Activated CD4-positive, alpha-beta T cell treated with anti-CD3 and anti-CD28 coated beads for 36 hours (primary cell): ENCODE measurements at regions of chr14 and their contacts with region 1.

Region 1: DNA sequence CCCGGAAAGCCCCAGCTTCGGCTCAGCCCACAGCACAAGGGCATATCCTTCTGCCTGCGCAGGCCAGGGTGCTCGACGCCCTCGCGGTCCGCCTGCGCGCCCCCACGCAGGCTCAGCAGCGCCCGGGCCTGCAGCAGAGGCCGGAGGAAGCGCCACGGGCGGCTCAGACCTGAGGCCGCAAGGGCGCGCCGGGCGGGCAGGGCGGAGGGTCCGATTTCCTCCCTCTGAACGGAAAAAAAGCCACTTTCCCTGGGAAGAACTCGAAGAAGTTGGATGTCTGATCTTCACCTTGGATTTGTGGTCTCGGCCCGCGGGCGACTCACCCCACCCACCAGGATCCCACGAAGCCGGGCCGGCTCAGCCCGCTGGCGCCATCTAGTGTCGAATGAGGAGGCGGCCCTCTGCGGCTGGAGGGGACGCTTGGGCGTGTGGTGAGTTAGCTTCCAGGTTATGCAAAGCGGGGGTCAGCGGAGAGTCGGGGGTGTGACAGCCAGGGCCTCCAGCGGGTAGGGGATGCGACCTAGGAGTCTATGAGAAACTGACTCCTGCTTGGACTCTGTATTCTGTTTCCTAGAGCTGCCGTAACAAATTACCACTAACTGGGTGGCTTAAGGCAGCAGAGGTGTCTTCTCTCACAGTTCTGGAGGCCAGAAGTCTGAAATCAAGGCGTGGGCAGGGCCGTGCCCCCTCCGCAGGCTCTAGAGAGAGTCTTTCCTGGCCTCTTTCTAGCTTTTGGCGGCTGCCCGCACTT is 40.0 kb upstream of the SRSF5 start:
- DNase-seq: peak; percentile 90
- ATAC-seq: peak; percentile 91
- H3K4me3 Mint-ChIP-seq: peak overlapping the region; percentile 61
- H3K27ac Mint-ChIP-seq: peak overlapping the region; percentile 21
- H3K4me1 Mint-ChIP-seq: peaks cover 15% of the 10 kb centered on the region
- H3K27me3 Mint-ChIP-seq: peaks cover under 1% of the 10 kb centered on the region

Region 2: GRCh38 chr14:69242311-69243224 is 484.4 kb before region 1 on chr14:
- CTCF ChIA-PET with region 1: no interaction called
- POLR2A ChIA-PET with region 1: no interaction called
- intact Hi-C with region 1: loop called in 1 of 2 experiments (anchors 10 kb)
- DNase-seq: peak; percentile 70
- ATAC-seq: peak; percentile 86
- H3K4me3 Mint-ChIP-seq: no peak overlapping the region
- H3K27ac Mint-ChIP-seq: no peak overlapping the region
- H3K4me1 Mint-ChIP-seq: no peaks in the 10 kb centered on the region
- H3K27me3 Mint-ChIP-seq: no peaks in the 10 kb centered on the region

Region 3: GRCh38 chr14:69580009-69580577 is 146.8 kb before region 1 on chr14:
- CTCF ChIA-PET with region 1: interaction called, 77 read pairs
- POLR2A ChIA-PET with region 1: no interaction called
- intact Hi-C with region 1: loop called (anchors 1 kb)
- DNase-seq: peak; percentile 54
- ATAC-seq: peak; percentile 64
- H3K4me3 Mint-ChIP-seq: no peak overlapping the region
- H3K27ac Mint-ChIP-seq: no peak overlapping the region
- H3K4me1 Mint-ChIP-seq: no peaks in the 10 kb centered on the region
- H3K27me3 Mint-ChIP-seq: peaks cover 13% of the 10 kb centered on the region

Region 4: GRCh38 chr14:69611201-69612011 is 115.5 kb before region 1 on chr14 and contains the start of gene SUSD6:
- CTCF ChIA-PET with region 1: interaction called, 5 read pairs
- POLR2A ChIA-PET with region 1: no interaction called
- intact Hi-C with region 1: loop called in 1 of 2 experiments (anchors 2 kb)
- DNase-seq: peak; percentile 95
- ATAC-seq: peak; percentile 74
- H3K4me3 Mint-ChIP-seq: peak within 1 kb of the TSS; percentile 87
- H3K27ac Mint-ChIP-seq: peak within 1 kb of the TSS; percentile 99
- H3K4me1 Mint-ChIP-seq: peaks cover 48% of the 10 kb centered on the region
- H3K27me3 Mint-ChIP-seq: no peaks in the 10 kb centered on the region
- total RNA-seq, gene SUSD6: 57.9 to 59.3 TPM

Region 5: DNA sequence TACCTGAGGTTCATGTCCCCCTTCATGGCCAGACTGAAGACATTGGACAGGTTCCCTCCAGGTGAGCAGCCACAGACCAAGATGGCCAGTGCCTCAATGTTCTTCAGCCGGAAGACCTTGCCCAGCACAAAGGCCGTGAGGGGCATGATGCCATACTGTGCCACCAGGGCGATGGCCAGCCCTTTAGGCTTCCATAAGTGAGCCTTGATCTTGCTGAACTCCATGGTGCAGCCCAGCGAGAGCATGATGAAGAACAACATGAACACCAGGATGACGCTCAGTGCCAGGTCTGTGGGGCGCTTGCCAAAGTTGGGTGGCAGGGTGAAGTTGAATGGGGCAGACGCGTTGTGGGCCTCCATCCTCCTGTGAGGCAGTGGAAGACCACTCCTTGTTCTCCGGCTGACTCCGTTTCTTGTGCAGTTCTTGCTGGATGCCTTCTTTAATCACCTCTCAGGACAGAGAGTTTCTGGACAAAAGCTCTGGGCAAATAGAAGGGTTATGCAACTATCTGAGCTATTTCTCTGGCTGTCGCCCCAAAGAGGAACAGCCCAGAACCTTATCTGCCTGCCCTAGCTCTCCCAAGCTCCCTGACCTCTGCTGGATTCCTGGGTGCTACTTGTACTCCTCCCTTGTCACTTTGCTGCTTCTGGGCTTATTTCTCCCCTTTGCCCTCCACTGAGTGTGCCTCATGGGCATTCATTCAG is 70.0 kb after region 1 on chr14 and contains the start of gene SLC10A1:
- CTCF ChIA-PET with region 1: no interaction called
- POLR2A ChIA-PET with region 1: no interaction called
- intact Hi-C with region 1: loop called in 1 of 2 experiments (anchors 5 kb)
- DNase-seq: no peak
- ATAC-seq: no peak
- H3K4me3 Mint-ChIP-seq: no peak within 1 kb of the TSS
- H3K27ac Mint-ChIP-seq: no peak within 1 kb of the TSS
- H3K4me1 Mint-ChIP-seq: no peaks in the 10 kb centered on the region
- H3K27me3 Mint-ChIP-seq: no peaks in the 10 kb centered on the region
- total RNA-seq, gene SLC10A1: not detected

Region 6: DNA sequence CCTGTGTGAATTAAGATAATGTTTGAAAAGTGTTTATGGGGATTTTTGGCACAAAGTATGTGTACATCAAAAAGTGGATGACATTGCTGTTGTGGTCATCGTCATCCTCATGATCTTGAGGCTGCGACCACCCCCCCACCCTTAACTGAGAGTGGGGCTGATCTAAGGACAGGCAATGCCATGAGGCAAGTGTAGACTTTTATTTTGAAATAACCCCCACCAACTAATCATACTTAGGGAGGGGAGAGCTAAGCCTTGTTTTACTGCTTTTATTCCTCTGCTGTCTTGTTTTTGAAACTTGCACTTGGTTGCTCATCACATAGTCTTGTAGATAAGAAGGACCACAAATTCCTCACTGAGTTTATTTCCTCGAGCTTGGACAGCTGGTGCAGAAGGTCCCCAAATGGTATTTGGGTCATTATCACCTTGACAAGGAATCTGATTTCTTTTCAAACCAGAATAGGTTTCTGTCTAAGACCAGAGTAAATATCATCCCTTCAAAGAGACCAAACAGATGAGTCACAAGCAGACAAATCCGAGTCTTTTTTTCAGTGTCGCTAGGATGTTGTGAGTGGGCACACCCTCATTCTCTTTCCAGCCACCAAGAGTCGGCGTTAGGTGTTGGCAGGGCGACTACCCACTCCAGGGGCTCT is 128.4 kb after region 1 on chr14:
- CTCF ChIA-PET with region 1: no interaction called
- POLR2A ChIA-PET with region 1: no interaction called
- intact Hi-C with region 1: no loop called
- DNase-seq: no peak
- ATAC-seq: no peak
- H3K4me3 Mint-ChIP-seq: no peak overlapping the region
- H3K27ac Mint-ChIP-seq: no peak overlapping the region
- H3K4me1 Mint-ChIP-seq: no peaks in the 10 kb centered on the region
- H3K27me3 Mint-ChIP-seq: no peaks in the 10 kb centered on the region

Region 7: GRCh38 chr14:70027785-70028428 is 301.0 kb after region 1 on chr14:
- CTCF ChIA-PET with region 1: interaction called, 11 read pairs
- POLR2A ChIA-PET with region 1: no interaction called
- intact Hi-C with region 1: loop called (anchors 1 to 5 kb)
- DNase-seq: peak; percentile 84
- ATAC-seq: peak; percentile 68
- H3K4me3 Mint-ChIP-seq: no peak overlapping the region
- H3K27ac Mint-ChIP-seq: no peak overlapping the region
- H3K4me1 Mint-ChIP-seq: no peaks in the 10 kb centered on the region
- H3K27me3 Mint-ChIP-seq: peaks cover 2% of the 10 kb centered on the region